ENCODE measurements at regions of chr15 and their contacts with region 1.

Region 1: DNA sequence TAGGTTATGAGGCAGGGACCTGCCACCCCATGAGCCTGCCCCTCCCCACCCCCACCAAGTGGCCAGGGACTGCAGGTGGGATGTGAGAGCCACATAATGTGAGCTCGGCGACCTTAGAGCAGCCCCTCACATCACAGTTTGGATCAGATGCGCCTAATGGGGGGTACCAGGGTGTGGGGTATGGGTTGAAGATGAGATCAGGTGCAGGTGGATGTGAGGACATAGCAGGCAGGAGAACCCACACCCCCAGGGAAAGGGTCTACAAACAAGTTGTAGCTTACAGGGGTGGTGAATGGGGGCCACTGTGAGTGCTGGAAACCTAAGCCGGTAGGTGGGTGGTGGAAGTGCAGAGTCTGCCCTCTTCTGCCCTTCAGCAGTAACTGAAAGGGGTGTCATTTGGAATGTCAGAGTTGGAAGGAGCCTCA is 94.0 kb downstream of the CORO2B start:
- DNase-seq: no peak
- CTCF ChIP-seq: no peak

Region 2: GRCh38 chr15:68304589-68305337 is 368.0 kb before region 1 on chr15:
- CTCF ChIA-PET with region 1: interaction called, 19 read pairs
- POLR2A ChIA-PET with region 1: no interaction called
- DNase-seq: no peak
- CTCF ChIP-seq: no peak

Region 3: GRCh38 chr15:68559345-68560310 is 113.2 kb before region 1 on chr15:
- CTCF ChIA-PET with region 1: interaction called, 54 read pairs
- POLR2A ChIA-PET with region 1: no interaction called
- DNase-seq: peak; percentile 88
- CTCF ChIP-seq: peak; percentile 91

Region 4: DNA sequence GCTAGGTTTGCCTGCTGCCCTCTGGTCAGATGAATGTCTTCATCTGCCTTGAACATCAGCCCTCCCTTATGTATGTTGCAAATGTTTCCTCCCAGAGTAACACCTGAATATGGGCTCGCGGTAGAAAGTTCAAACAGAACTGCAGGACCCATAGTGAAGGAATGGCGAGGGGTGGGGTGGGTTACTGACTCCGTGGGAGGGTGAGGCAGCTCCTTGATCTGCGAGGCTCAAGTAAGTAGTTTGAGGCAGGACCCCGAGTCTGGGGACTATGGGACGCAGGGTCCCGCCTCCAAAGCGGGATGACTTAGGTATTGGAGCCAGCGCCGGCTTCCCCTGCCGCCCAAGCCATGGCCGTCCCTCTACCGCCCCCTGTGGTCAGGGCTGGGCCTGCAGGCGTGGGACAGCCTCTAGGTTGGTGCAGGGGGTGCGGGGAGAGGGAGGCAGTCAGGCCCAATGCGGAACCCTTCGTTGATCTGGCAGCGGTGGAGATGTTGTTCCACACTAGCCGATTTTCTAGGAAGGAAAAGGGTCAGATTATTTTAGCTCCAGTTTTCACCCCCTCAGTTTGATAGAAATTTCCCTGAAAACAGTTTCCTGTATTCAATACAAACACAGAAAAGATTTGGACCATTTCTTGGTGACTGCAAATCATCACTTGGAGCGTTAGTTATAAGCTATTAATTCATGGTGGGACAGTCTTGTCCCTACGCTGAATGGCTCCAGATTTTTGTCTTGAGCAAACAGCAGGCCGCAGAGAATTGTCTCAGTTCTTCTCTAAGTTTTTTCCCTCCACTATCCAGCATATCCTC is 21.7 kb before region 1 on chr15:
- CTCF ChIA-PET with region 1: interaction called, 47 read pairs
- POLR2A ChIA-PET with region 1: no interaction called
- DNase-seq: peak; percentile 59
- CTCF ChIP-seq: peak; percentile 46

Region 5: GRCh38 chr15:68691705-68692104 is 18.9 kb after region 1 on chr15:
- CTCF ChIA-PET with region 1: interaction called, 16 read pairs
- POLR2A ChIA-PET with region 1: no interaction called
- DNase-seq: no peak
- CTCF ChIP-seq: no peak

Region 6: DNA sequence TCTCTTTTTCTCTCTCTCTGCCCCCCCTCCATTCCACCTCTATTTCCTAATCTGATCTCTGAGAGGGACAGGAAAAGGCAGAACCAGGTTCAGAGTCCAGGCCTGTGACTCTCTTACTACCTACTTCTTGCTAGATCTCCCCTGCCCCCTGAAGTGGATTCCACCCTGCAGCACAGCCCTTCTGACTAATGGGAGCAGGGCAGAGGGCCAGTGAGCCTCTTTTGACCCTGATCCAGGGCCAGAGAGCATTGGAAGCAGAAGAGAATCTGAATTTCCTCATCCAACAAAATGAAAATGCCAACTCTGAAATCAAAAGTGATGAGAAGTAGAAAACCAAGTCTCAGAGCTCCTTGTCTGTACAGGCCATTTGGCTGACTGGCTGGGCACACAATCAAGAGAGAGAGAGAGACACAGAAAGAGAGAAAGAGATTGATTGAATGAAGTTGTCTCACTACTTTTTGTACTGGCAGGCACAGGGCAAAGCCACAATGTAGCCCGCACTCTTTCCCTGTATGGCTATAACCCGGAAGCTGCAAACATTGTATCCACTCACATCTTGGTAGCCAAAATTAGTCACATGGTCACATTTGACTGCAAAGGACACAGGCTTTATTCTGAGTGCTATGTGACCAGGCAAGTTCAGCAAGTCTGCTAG is 456.0 kb after region 1 on chr15:
- CTCF ChIA-PET with region 1: no interaction called
- POLR2A ChIA-PET with region 1: no interaction called
- DNase-seq: no peak
- CTCF ChIP-seq: no peak